IMR-90 (cell line): ENCODE measurements at regions of chr9 and their contacts with region 1.

Region 1: GRCh38 chr9:16992138-16992537 is 121.7 kb upstream of the BNC2 start:
- DNase-seq: no peak
- ATAC-seq: no peak
- H3K4me3 ChIP-seq: no peak overlapping the region
- H3K27ac ChIP-seq: no peak overlapping the region
- H3K4me1 ChIP-seq: peaks cover 3% of the 10 kb centered on the region
- H3K27me3 ChIP-seq: no peaks in the 10 kb centered on the region
- CTCF ChIP-seq: no peak
- POLR2A ChIP-seq: no peak
- RAD21 ChIP-seq: no peak

Region 2: DNA sequence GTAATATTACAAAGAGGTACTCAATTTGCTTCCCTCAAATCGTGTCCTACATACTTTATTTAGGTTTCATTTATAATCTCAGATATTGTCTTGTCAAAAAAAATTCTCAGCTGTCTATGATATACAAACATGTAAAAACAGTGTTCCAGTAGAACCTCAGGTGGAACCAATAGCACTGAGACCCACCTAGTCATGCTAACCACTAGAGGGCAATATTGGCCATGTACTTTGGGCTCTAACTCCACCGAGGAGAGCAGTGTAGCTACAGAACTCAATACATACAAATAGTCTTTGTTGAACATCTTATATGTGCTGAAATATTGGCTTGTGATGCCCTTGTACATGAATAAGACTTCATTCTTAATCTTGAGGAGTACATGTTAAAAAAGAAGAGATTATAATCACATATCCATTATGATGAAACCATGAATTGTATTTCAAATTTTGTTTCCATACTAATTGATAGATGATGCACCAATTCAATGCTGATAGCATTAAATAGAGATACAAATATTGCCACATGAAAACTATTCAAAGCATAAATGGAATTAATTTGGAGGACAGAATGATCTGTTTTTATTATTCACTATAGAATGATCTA is 71.5 kb after region 1 on chr9:
- CTCF ChIA-PET with region 1: no interaction called
- POLR2A ChIA-PET with region 1: no interaction called
- dilution Hi-C with region 1: no loop called
- in situ Hi-C with region 1: no loop called
- intact Hi-C with region 1: loop called (anchors 10 kb)
- DNase-seq: peak; percentile 64
- ATAC-seq: peak; percentile 93
- H3K4me3 ChIP-seq: no peak overlapping the region
- H3K27ac ChIP-seq: no peak overlapping the region
- H3K4me1 ChIP-seq: no peaks in the 10 kb centered on the region
- H3K27me3 ChIP-seq: no peaks in the 10 kb centered on the region
- CTCF ChIP-seq: peak; percentile 67
- POLR2A ChIP-seq: no peak
- RAD21 ChIP-seq: peak; percentile 73